Transverse colon (tissue), 4 donors: ENCODE measurements at regions of chr12 and their contacts with region 1.

Region 1: DNA sequence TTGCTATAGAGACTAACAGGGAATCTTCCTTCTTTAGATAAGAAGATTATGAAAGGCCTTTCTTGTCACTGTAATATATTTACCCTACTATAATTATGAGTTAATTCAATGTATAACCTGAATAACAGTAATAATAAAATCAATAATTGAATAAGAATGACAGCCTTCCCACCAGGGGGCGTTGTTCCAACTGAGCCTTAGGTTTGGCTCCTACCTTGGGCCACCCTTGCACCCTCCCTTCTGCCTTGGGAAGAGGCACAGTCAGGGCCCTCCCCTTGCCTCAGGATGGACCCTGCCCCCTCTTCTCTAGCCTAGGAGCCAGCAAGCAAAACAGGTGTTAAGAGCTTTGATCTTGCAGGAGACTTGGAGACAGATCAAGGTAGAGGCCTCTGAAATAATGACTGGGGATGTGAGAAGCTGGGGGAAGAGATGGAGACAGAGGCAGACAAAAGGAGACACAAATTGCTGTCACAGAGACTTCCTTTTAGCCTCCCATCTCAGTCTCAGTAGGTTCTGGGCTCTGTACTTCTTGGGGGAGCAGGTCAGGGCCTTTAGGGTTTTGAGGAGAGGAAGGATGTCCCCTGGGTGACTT is 40.1 kb upstream of the CISTR start:
- DNase-seq: no peak
- H3K4me3 ChIP-seq: no peak overlapping the region
- H3K27ac ChIP-seq: no peak overlapping the region
- H3K4me1 ChIP-seq: no peaks in the 10 kb centered on the region
- H3K27me3 ChIP-seq: peaks cover 95% of the 10 kb centered on the region
- CTCF ChIP-seq: peak in 3 of 5 experiments; percentile 33 to 42 (median 34)
- EP300 ChIP-seq: no peak
- POLR2A ChIP-seq: no peak

Region 2: DNA sequence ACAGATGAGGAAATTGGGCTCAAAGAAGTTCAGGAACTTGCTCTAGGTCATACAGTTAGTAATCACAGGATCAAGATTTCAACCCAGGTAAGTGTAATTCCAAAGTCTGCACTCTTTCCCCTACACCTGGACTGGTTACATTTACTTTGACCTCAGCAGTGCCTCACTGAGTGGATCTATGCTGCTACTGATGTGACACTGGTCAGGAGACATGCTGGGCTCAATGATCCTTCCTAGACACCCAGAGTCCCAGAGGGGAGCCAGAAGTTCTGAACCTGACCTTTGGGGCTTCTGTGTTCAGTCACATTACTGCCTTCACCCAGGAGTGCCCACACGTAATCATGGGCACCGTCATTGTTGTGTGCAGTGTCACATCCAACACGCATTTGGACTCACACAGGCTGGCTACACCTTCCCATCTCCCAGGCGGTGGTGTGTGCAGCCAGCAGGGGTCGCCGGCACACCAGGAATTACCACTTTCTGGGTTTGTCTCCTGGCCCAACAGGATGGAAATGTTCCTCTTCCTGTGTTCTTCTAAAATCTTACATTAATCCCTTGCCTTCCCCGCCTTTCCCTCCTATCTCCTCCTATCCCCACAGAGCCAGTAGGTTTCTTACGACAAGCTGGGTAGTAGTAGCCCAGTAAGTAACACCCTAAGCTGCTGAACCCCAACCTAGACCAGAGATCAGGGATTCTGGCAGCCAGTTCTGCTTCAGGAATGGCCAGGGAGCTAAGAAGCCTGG is 90.1 kb before region 1 on chr12:
- in situ Hi-C with region 1: no loop called
- intact Hi-C with region 1: no loop called
- DNase-seq: peak; percentile 84
- H3K4me3 ChIP-seq: no peak overlapping the region
- H3K27ac ChIP-seq: no peak overlapping the region
- H3K4me1 ChIP-seq: peaks cover 0 to 5% (median under 1%) of the 10 kb centered on the region in 4 donors
- H3K27me3 ChIP-seq: peaks cover 96% of the 10 kb centered on the region
- CTCF ChIP-seq: peak; percentile 81 to 88 (median 85)
- EP300 ChIP-seq: no peak
- POLR2A ChIP-seq: no peak

Region 3: GRCh38 chr12:53924521-53925405 is 132.9 kb after region 1 on chr12:
- in situ Hi-C with region 1: no loop called
- intact Hi-C with region 1: no loop called
- DNase-seq: no peak
- H3K4me3 ChIP-seq: no peak overlapping the region
- H3K27ac ChIP-seq: no peak overlapping the region
- H3K4me1 ChIP-seq: peaks cover 0 to 3% (median 0%) of the 10 kb centered on the region in 4 donors
- H3K27me3 ChIP-seq: peaks cover 99% of the 10 kb centered on the region
- CTCF ChIP-seq: no peak
- EP300 ChIP-seq: no peak
- POLR2A ChIP-seq: no peak

Region 4: DNA sequence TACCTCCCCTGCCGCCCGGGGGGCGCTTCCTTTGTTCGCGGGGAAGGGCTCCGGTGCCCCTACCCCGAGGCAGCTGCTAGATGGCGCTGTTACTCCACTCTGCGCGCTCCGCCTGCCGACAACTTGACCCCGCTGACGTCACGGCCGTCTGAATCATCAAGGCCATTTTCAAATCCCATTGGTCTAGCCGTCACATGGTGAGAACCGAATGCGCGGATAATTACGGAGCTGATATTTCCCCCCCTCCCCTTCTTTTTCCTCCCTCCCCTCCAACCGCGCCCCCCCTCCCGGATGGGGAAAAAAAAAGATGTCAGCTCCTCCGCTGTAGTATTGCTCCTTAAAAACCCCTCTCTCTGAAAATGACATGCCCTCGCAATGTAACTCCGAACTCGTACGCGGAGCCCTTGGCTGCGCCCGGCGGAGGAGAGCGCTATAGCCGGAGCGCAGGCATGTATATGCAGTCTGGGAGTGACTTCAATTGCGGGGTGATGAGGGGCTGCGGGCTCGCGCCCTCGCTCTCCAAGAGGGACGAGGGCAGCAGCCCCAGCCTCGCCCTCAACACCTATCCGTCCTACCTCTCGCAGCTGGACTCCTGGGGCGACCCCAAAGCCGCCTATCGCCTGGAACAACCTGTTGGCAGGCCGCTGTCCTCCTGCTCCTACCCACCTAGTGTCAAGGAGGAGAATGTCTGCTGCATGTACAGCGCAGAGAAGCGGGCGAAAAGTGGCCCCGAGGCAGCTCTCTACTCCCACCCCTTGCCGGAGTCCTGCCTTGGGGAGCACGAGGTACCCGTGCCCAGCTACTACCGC is 193.3 kb after region 1 on chr12 and contains the start of gene HOXC10:
- in situ Hi-C with region 1: loop called in 1 of 4 experiments (anchors 25 kb)
- intact Hi-C with region 1: no loop called
- DNase-seq: peak; percentile 70
- H3K4me3 ChIP-seq: peak within 1 kb of the TSS in 1 of 4 donors; percentile 7
- H3K27ac ChIP-seq: no peak within 1 kb of the TSS
- H3K4me1 ChIP-seq: peaks cover 7 to 17% (median 12%) of the 10 kb centered on the region in 4 donors
- H3K27me3 ChIP-seq: peaks cover 100% of the 10 kb centered on the region
- CTCF ChIP-seq: peak in 4 of 5 experiments; percentile 18 to 43 (median 38)
- EP300 ChIP-seq: no peak
- POLR2A ChIP-seq: no peak
- total RNA-seq, gene HOXC10: not detected

Region 5: GRCh38 chr12:54214553-54215406 is 422.9 kb after region 1 on chr12:
- in situ Hi-C with region 1: loop called in 1 of 4 experiments (anchors 25 kb)
- intact Hi-C with region 1: no loop called
- DNase-seq: peak; percentile 90
- H3K4me3 ChIP-seq: peak overlapping the region in 2 of 4 donors; percentile 3 to 25
- H3K27ac ChIP-seq: no peak overlapping the region
- H3K4me1 ChIP-seq: peaks cover 9 to 34% (median 27%) of the 10 kb centered on the region in 4 donors
- H3K27me3 ChIP-seq: peaks cover 93% of the 10 kb centered on the region
- CTCF ChIP-seq: peak; percentile 88 to 97 (median 93)
- EP300 ChIP-seq: no peak
- POLR2A ChIP-seq: no peak